B cell (primary cell): ENCODE measurements at regions of chr19 and their contacts with region 1.

Region 1: GRCh38 chr19:58380722-58381466 is at the start of gene ZNF837:
- DNase-seq: peak; percentile 100
- ATAC-seq: peak; percentile 86
- H3K4me3 ChIP-seq: peak within 1 kb of the TSS; percentile 22 to 78 (median 71)
- H3K4me3 Mint-ChIP-seq: peak within 1 kb of the TSS; percentile 92
- H3K27ac ChIP-seq: peak within 1 kb of the TSS; percentile 89 to 97
- H3K27ac Mint-ChIP-seq: peak within 1 kb of the TSS; percentile 95
- H3K4me1 ChIP-seq: peaks cover 27 to 35% of the 10 kb centered on the region in 2 donors
- H3K4me1 Mint-ChIP-seq: peaks cover 32% of the 10 kb centered on the region
- H3K27me3 ChIP-seq: no peaks in the 10 kb centered on the region
- H3K27me3 Mint-ChIP-seq: no peaks in the 10 kb centered on the region
- CTCF ChIP-seq: no peak
- total RNA-seq, gene ZNF837: 3.1 and 4.2 TPM in 2 replicates

Region 2: DNA sequence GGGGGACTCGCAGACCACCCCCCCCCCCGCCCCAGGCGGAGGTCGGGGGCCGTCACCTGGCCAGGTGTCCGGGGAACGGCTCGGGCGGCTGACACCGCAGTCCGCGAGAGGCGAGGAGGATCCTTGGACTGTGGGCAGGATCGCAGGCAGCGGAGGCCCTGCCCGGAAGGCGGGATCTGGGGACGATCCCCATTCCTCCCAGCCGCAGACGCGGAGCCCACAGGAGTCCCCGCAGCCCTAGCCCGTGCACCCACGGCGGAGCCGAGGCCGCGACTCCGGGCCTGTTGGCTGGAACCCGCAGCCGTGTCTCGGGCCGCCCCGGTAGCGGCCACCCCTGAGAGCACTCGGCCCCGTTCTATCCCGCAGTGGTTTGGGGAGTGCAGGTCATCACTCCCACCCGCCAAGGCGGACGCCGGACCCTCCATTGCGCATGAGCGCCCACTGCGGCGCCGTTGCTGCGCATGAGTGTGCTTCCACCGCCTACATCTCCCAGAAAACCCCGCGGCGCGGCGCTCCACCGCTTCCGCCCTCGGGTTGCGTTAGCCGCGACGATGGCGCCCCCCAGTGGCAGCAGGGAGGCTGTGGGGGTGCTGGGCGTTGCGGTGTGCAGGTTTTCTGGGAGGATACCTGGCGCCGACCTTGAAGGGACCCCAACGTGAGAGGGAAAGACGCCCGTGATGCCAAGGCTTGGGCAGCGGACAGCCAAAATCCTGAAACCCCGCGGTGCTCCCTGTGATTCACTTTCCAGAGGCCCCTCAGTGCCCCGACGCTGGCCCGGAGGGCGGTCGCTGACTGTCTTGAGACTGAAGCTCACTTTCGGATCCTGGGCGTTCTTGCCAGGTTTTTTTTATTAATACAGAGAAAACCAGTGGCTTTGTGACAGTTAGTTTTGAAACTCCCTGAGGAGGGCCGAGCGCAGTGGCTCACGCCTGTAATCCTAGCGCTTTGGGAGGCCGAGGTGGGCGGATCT is 225.9 kb before region 1 on chr19:
- CTCF ChIA-PET with region 1: no interaction called
- POLR2A ChIA-PET with region 1: no interaction called
- intact Hi-C with region 1: no loop called
- DNase-seq: peak; percentile 96
- ATAC-seq: peak; percentile 87
- H3K4me3 ChIP-seq: peak overlapping the region; percentile 32 to 98 (median 91)
- H3K4me3 Mint-ChIP-seq: peak overlapping the region; percentile 88
- H3K27ac ChIP-seq: peak overlapping the region; percentile 82 to 91
- H3K27ac Mint-ChIP-seq: peak overlapping the region; percentile 90
- H3K4me1 ChIP-seq: peaks cover 12 to 26% of the 10 kb centered on the region in 2 donors
- H3K4me1 Mint-ChIP-seq: peaks cover 12% of the 10 kb centered on the region
- H3K27me3 ChIP-seq: no peaks in the 10 kb centered on the region
- H3K27me3 Mint-ChIP-seq: no peaks in the 10 kb centered on the region
- CTCF ChIP-seq: peak; percentile 94

Region 3: DNA sequence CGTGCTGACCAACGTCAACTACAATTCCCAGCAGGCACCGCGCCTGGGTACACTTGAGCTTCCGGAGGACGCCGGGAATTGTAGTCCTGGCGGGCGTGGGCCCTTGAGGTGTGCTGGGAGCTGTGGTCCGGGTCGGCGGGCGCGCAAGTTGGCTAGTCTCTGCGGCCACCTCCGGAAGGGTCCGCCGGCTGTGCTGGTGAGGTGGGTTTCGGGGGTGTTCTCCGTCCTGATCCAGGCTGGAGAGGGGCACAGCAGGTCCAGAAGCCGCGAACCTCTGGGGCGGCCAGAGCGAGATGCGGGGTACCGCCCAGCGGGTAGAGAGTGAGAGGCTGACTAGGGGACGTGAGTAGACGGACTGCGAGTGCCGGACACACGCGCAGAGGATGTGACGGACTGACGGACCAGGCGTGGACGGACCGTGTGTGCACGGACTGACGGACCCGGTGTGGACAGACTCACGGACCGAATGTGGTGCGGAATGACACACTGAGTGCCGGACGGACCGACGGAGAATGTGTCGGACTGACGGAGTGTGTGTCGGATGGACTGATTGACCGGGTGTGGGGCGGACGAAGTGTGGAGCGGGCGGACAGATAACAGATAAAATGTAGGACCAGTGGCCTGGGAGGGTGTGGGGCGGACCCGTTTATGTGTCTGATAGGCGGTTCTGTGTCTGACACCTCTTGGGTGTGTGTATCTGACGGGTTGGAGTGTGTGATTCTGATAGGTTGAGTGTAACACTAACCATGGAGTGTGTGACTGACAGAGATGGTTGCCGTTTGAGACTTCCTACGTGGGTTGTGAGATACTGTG is 53.8 kb before region 1 on chr19 and contains the start of gene ZSCAN22:
- CTCF ChIA-PET with region 1: interaction called, 3 read pairs
- POLR2A ChIA-PET with region 1: no interaction called
- intact Hi-C with region 1: loop called (anchors 1 kb)
- DNase-seq: peak; percentile 90
- ATAC-seq: peak; percentile 92
- H3K4me3 ChIP-seq: peak within 1 kb of the TSS; percentile 72 to 98 (median 83)
- H3K4me3 Mint-ChIP-seq: no peak within 1 kb of the TSS
- H3K27ac ChIP-seq: peak within 1 kb of the TSS; percentile 71 to 82
- H3K27ac Mint-ChIP-seq: no peak within 1 kb of the TSS
- H3K4me1 ChIP-seq: peaks cover 11 to 23% of the 10 kb centered on the region in 2 donors
- H3K4me1 Mint-ChIP-seq: no peaks in the 10 kb centered on the region
- H3K27me3 ChIP-seq: no peaks in the 10 kb centered on the region
- H3K27me3 Mint-ChIP-seq: no peaks in the 10 kb centered on the region
- CTCF ChIP-seq: no peak
- total RNA-seq, gene ZSCAN22: 7.1 TPM in 2 replicates

Region 4: DNA sequence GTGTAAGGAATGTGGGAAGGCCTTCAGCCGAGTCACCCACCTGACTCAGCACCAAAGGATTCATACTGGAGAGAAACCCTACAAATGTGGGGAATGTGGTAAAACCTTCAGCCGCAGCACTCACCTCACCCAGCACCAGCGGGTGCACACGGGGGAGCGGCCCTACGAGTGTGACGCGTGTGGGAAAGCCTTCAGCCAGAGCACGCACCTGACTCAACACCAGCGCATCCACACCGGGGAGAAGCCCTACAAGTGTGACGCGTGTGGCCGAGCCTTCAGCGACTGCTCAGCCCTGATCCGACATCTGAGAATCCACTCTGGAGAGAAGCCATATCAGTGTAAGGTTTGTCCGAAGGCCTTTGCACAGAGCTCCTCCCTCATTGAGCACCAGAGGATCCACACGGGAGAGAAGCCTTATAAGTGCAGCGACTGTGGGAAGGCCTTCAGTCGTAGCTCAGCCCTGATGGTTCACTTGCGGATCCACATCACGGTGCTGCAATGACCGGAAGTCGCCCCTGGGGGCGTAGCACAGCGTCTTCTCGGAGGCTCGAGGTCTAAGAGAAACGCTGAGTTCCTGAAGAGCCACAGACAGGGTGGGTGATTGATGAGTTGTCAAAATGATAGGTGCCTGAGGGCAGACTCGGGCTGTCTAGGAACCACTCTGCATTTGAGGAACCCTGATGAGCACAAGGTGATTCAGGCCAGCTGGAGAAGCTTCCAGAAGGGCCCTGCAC is 41.9 kb before region 1 on chr19:
- CTCF ChIA-PET with region 1: no interaction called
- POLR2A ChIA-PET with region 1: no interaction called
- intact Hi-C with region 1: no loop called
- DNase-seq: no peak
- ATAC-seq: no peak
- H3K4me3 ChIP-seq: no peak overlapping the region
- H3K4me3 Mint-ChIP-seq: no peak overlapping the region
- H3K27ac ChIP-seq: no peak overlapping the region
- H3K27ac Mint-ChIP-seq: no peak overlapping the region
- H3K4me1 ChIP-seq: no peaks in the 10 kb centered on the region
- H3K4me1 Mint-ChIP-seq: no peaks in the 10 kb centered on the region
- H3K27me3 ChIP-seq: no peaks in the 10 kb centered on the region
- H3K27me3 Mint-ChIP-seq: no peaks in the 10 kb centered on the region
- CTCF ChIP-seq: no peak

Region 5: DNA sequence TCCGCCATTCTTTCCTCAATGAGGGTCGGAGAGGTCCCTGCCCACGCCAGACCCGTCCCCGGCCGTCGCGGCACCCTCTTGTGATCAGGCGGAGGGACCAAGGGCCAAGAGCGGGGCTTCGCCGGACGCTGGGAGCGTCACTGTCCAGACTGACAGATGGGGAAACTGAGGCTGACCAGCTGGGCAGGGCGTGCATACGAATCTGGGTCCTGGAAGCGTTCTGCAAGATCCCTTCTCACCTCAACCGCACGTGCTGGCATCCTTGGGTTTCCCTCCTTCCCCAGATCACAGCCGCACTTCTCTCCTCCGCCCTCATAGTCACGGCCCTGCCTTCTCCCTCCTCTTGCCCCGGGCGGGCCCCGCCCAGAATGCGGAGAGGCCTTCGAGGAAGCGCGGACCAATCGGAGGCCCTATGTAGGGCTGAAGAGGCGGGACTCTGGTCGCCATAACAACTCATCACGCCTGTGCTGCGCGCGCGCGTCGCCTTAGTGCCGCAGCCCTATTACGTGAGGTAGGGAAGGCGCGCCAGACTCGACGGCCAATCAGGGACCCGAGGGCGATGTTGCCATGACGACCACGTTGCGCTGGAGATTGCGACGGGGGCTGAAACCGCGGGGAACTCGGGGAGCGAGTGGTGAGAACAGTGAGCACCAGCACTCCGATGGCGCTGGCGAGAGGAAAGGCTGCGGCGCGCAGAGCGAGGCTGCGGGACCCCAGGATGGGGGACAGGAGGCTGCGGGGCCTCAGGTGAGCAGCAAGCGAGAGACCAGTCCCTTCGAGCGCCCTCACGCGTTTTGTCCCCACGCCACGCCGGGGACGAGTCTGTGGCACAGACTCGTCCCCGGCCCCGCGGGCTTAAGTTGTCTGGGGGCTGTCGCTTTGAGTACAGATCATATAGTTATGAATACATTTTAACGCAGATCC is 20.3 kb after region 1 on chr19:
- CTCF ChIA-PET with region 1: no interaction called
- POLR2A ChIA-PET with region 1: interaction called, 5 read pairs
- intact Hi-C with region 1: loop called (anchors 1 kb)
- DNase-seq: peak; percentile 100
- ATAC-seq: peak; percentile 97
- H3K4me3 ChIP-seq: peak overlapping the region; percentile 32 to 69 (median 64)
- H3K4me3 Mint-ChIP-seq: peak overlapping the region; percentile 89
- H3K27ac ChIP-seq: peak overlapping the region; percentile 62 to 87
- H3K27ac Mint-ChIP-seq: peak overlapping the region; percentile 91
- H3K4me1 ChIP-seq: peaks cover 7 to 15% of the 10 kb centered on the region in 2 donors
- H3K4me1 Mint-ChIP-seq: peaks cover 7% of the 10 kb centered on the region
- H3K27me3 ChIP-seq: peaks cover 0 to 19% (median 7%) of the 10 kb centered on the region in 4 experiments
- H3K27me3 Mint-ChIP-seq: peaks cover 3% of the 10 kb centered on the region
- CTCF ChIP-seq: no peak

Region 6: GRCh38 chr19:58466760-58467589 is 86.1 kb after region 1 on chr19 and contains the start of gene ZNF324:
- CTCF ChIA-PET with region 1: no interaction called
- POLR2A ChIA-PET with region 1: no interaction called
- intact Hi-C with region 1: loop called (anchors 1 kb)
- DNase-seq: peak; percentile 97
- ATAC-seq: peak; percentile 96
- H3K4me3 ChIP-seq: peak within 1 kb of the TSS; percentile 34 to 91 (median 89)
- H3K4me3 Mint-ChIP-seq: peak within 1 kb of the TSS; percentile 85
- H3K27ac ChIP-seq: peak within 1 kb of the TSS; percentile 18 to 90
- H3K27ac Mint-ChIP-seq: peak within 1 kb of the TSS; percentile 85
- H3K4me1 ChIP-seq: peaks cover 8 to 25% of the 10 kb centered on the region in 2 donors
- H3K4me1 Mint-ChIP-seq: peaks cover 26% of the 10 kb centered on the region
- H3K27me3 ChIP-seq: no peaks in the 10 kb centered on the region
- H3K27me3 Mint-ChIP-seq: no peaks in the 10 kb centered on the region
- CTCF ChIP-seq: no peak
- total RNA-seq, gene ZNF324: 17.6 and 21.0 TPM in 2 replicates